Transverse colon (tissue), 4 donors: ENCODE measurements at regions of chr12 and their contacts with region 1.

Region 1: DNA sequence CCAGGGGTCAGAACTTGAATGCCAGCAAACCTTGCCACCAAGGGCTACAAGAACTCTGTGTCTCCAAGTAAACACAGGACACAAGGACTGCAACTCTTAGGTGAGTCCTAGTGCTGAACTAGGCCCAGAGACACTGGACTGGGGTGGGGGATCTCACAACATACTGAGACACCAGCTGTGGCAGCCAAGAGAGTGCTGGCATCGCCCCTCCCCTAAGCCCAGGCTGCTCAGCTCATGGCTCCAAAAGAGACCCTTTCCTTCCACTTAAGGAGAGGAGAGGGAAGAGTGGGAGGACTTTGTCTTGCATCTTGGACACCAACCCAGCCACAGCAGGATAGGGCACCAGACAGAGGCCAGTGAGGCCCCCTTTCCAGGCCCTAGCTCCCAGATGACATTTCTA is 254.8 kb downstream of the ALG10B start:
- DNase-seq: no peak
- H3K4me3 ChIP-seq: no peak overlapping the region
- H3K27ac ChIP-seq: no peak overlapping the region
- H3K4me1 ChIP-seq: no peaks in the 10 kb centered on the region
- H3K27me3 ChIP-seq: no peaks in the 10 kb centered on the region
- CTCF ChIP-seq: no peak
- EP300 ChIP-seq: no peak
- POLR2A ChIP-seq: no peak

Region 2: GRCh38 chr12:38954238-38954873 is 382.9 kb after region 1 on chr12:
- in situ Hi-C with region 1: no loop called
- intact Hi-C with region 1: no loop called
- DNase-seq: no peak
- H3K4me3 ChIP-seq: no peak overlapping the region
- H3K27ac ChIP-seq: no peak overlapping the region
- H3K4me1 ChIP-seq: peaks cover 0 to 11% (median 2%) of the 10 kb centered on the region in 4 donors
- H3K27me3 ChIP-seq: no peaks in the 10 kb centered on the region
- CTCF ChIP-seq: no peak
- EP300 ChIP-seq: no peak
- POLR2A ChIP-seq: no peak

Region 3: DNA sequence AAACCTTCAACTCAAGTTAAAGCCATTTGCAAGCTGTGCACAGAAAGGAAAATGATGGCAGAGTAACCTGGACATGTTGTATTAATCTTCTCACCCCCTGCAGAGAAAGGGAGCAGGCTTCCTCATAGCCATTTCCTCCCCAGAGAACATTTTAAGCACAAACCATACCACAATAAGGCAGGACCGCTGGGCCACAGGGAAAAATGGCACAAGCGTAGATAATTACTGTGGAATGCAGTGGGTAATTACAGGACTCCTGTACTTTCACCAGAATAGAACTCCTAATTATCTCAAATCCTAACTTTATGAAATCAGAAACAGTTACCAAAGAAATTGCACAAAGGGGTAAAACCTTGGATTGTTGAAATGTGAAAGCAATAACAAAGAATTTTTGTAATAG is 655.8 kb after region 1 on chr12:
- in situ Hi-C with region 1: no loop called
- intact Hi-C with region 1: loop called (anchors 5 kb)
- DNase-seq: no peak
- H3K4me3 ChIP-seq: no peak overlapping the region
- H3K27ac ChIP-seq: no peak overlapping the region
- H3K4me1 ChIP-seq: no peaks in the 10 kb centered on the region
- H3K27me3 ChIP-seq: no peaks in the 10 kb centered on the region
- CTCF ChIP-seq: no peak
- EP300 ChIP-seq: no peak
- POLR2A ChIP-seq: no peak

Region 4: DNA sequence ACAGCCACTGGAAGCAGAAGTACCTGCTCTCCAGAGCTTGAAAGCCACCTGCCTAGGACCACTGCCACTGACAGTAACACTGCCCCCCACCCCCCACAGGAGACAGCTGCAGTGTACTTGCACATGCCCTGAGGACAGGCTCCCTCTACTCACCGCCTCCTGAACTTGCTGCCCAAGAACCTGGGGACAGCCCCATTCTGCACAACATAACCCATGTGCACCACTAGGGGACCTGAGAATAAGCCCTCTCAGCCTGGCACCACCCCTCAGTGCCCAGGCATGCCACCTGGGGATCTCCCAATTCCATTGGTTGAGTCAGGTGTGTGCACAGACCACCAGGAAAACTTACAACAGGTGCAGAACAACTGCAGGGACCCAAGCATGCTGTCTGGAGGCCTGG is 938.6 kb after region 1 on chr12:
- in situ Hi-C with region 1: no loop called
- intact Hi-C with region 1: loop called (anchors 10 kb)
- DNase-seq: no peak
- H3K4me3 ChIP-seq: no peak overlapping the region
- H3K27ac ChIP-seq: no peak overlapping the region
- H3K4me1 ChIP-seq: no peaks in the 10 kb centered on the region
- H3K27me3 ChIP-seq: no peaks in the 10 kb centered on the region
- CTCF ChIP-seq: no peak
- EP300 ChIP-seq: no peak
- POLR2A ChIP-seq: no peak